Activated CD4-positive, alpha-beta T cell treated with anti-CD3 and anti-CD28 coated beads for 36 hours (primary cell): ENCODE measurements at regions of chr7 and their contacts with region 1.

Region 1: GRCh38 chr7:24587848-24588247 is 14.6 kb downstream of the PALS2 start:
- DNase-seq: peak; percentile 64
- ATAC-seq: peak; percentile 64
- H3K4me3 Mint-ChIP-seq: no peak overlapping the region
- H3K27ac Mint-ChIP-seq: no peak overlapping the region
- H3K4me1 Mint-ChIP-seq: peaks cover 25% of the 10 kb centered on the region
- H3K27me3 Mint-ChIP-seq: no peaks in the 10 kb centered on the region

Region 2: DNA sequence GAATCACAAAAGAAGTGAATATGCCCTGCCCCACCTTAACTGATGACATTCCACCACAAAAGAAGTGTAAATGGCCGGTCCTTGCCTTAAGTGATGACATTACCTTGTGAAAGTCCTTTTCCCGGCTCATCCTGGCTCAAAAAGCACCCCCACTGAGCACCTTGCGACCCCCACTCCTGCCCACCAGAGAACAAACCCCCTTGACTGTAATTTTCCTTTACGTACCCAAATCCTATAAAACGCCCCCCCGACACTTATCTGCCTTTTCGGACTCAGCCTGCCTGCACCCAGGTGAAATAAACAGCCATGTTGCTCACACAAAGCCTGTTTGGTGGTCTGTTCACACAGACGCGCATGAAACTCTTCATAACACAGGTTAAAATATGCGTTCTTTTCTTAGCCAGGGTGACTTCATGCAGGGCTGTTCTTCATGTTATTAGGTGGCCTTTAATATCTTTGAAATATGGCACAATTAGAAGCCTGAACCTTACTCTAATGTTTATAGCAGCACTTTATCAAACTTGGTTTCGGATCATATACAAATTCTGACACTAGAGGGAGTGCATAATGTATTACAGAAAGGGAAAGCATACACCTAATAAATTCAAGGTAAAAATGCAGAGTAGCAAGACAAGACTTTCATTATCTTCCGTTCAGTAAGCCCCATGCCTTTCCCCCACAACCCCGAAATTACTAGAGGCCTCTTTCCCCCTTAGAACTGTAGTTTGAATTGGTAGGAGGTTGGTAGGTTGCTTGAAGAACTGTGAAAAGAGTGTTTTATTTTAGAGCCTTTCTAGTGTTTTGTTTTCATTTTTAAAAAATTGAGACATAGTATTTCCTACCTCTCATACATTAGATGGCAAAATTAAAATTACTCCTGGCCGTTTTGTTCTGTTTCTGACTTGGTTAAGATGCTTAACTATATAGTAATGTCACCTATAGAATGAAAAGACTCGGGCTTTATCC is 185.9 kb before region 1 on chr7:
- CTCF ChIA-PET with region 1: no interaction called
- POLR2A ChIA-PET with region 1: no interaction called
- intact Hi-C with region 1: loop called in 1 of 2 experiments (anchors 5 kb)
- DNase-seq: no peak
- ATAC-seq: no peak
- H3K4me3 Mint-ChIP-seq: no peak overlapping the region
- H3K27ac Mint-ChIP-seq: no peak overlapping the region
- H3K4me1 Mint-ChIP-seq: peaks cover 8% of the 10 kb centered on the region
- H3K27me3 Mint-ChIP-seq: no peaks in the 10 kb centered on the region